ENCODE measurements at regions of chr16 and their contacts with region 1.

Region 1: DNA sequence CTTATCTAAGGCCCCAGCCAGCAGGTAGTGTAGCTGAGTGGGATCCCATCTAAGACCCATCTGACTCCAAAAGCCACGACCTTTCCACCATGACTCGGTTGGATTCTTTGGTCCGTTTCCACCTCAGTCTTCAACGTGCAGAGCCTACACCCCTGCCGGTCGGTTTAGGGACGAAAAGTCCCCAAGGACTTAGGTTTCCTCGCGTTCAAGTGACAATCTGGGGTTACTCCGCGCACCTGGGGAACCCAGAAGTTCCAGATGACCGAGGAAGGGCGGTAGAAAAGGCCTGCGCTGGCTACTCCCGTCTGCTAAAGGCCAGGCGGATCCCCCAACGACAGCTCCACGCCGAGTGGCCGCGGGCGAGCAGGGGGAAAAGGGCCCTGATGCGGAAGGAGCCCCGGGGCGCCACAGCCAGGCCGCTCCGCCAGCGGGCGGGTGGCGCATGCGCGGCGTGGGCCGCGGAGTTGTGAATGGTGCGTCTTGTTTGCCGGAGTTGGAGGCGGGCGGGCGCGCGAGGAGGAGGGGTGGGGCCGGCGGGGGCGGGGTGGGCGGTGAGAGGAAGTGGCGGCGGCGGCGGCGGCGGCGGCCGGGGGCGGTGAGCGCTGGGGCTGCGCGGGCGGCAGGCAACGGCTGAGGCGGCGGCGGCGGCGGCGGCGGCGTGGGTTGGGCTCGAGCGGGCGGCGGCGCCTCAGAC is at the start of gene CBFB:
- DNase-seq: peak; percentile 97
- ATAC-seq: peak; percentile 95
- total RNA-seq, gene CBFB: 22.0 TPM

Region 2: DNA sequence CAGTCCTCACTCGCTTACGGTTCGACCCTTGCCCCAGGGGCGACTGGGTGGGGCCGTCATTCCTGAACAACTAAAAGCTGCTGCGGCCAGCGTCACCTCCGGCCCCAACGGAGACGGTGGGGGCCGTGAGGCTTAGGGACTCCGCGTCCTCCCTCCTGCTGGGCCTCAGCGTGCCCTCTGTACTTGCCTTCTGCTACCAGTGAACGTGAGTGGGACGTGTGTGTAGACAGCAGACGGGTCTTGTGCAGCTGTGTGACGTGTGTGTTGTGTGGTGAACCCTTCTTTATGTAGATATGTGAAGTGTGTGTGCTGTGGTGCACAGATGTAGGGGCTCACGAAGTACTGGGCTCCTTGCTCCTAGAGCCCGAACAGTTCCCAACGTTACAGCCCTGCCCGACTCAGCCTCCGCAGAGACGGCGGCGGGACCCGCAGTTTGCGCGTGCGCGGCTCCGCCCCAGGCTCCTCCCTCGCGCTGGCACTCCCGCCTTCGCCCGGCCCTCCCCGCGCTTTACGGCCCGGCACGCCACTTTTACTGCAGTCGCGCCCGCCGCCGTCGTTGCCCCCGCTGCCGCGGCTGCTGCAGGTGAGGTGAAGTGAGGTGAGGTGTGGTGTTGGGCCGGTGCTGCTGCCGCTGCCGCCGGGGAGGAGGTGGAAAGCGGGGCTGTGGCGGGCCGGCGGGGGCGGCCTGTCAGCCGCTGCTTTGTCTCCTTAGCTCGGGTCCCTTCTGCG is 80.9 kb after region 1 on chr16 and contains the start of gene PHAF1:
- intact Hi-C with region 1: loop called (anchors 5 kb)
- DNase-seq: peak; percentile 96
- ATAC-seq: peak; percentile 98
- total RNA-seq, gene PHAF1: 10.8 TPM

Region 3: GRCh38 chr16:67183627-67184328 is 155.1 kb after region 1 on chr16 and contains the start of gene MATCAP1:
- intact Hi-C with region 1: no loop called
- DNase-seq: peak; percentile 97
- ATAC-seq: peak; percentile 96
- total RNA-seq, gene MATCAP1: 9.8 TPM

Region 4: DNA sequence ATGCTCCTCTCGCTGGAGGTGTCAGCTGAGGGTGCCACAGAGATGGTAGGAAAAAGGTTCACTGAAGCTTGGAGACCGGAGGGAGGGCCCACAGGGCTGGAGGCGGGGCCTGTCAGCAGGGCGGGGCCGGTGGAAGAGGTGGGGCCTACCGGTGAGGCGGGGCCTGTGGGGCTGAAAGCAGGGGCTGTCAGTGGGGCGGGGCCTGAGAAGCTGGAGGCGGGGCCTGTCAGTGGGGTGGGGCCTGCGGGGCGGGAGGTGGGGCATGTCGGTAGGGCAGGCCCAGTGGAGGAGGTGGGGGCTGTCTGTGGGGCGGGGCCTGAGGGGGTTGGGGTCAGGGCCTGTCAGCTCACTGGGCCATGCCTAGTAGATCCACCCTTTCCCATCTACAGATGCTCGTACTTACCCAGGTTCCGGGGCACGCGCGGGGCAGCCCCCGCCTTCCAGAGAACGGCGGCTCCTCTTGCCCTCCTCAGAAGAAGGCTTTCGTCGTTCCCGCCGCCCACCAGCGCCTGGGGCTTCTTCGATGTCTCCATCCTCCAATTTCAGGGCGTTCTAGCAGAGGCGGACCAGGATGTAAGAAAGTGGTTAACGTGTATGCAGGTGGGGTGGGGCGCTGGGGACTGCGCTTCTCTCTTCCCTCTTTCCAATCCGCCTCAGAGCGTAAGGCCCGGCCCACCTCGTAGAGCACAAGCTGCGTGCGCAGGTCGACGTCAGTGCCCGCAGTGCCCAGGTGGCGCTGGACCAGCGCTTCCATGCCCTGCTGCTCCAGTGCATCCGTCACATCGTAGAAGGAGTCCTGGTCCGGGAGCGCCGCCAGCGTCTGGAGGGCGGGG is 208.1 kb after region 1 on chr16:
- intact Hi-C with region 1: no loop called
- DNase-seq: peak; percentile 58
- ATAC-seq: no peak

Region 5: DNA sequence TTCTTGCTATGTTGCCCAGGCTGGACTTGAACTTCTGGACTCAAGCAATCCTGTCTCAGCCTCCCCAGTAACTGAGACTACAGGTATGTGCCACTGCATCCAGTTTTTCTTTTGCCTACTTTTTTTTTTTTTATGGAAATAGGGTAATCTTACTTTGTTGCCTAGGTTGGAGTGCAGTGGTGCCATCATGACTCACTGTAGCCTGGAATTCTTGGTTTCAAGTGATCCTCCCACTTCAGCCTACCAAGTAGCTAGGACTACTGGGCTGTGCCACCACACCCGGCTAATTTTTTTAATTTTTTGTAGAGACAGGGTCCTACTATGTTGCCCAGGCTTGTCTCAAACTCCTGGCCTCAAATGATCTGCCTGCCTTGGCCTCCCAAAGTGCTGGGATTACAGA is 307.9 kb after region 1 on chr16:
- intact Hi-C with region 1: no loop called
- DNase-seq: no peak
- ATAC-seq: no peak

Measured in Right ventricle myocardium inferior (tissue), 1 donor.